Heart right ventricle (tissue), 16 donors: ENCODE measurements at regions of chr3 and their contacts with region 1.

Region 1: DNA sequence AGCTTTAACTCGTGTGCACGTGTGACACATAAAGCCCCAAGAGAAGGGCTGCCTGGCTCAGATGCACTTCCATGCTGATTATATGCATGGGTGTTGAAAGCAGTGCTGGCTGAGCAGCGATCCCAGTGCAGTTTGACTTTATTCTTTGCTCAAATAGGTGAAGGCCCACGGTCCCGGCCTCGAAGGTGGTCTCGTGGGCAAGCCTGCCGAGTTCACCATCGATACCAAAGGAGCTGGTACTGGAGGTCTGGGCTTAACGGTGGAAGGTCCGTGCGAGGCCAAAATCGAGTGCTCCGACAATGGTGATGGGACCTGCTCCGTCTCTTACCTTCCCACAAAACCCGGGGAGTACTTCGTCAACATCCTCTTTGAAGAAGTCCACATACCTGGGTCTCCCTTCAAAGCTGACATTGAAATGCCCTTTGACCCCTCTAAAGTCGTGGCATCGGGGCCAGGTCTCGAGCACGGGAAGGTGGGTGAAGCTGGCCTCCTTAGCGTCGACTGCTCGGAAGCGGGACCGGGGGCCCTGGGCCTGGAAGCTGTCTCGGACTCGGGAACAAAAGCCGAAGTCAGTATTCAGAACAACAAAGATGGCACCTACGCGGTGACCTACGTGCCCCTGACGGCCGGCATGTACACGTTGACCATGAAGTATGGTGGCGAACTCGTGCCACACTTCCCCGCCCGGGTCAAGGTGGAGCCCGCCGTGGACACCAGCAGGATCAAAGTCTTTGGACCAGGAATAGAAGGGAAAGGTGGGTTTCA is 87.7 kb downstream of the DNASE1L3 start:
- DNase-seq: no peak
- ATAC-seq: no peak
- H3K4me3 ChIP-seq: no peak overlapping the region
- H3K27ac ChIP-seq: no peak overlapping the region
- H3K4me1 ChIP-seq: peaks cover 14 to 31% (median 26%) of the 10 kb centered on the region in 9 donors
- H3K27me3 ChIP-seq: no peaks in the 10 kb centered on the region
- CTCF ChIP-seq: no peak

Region 2: DNA sequence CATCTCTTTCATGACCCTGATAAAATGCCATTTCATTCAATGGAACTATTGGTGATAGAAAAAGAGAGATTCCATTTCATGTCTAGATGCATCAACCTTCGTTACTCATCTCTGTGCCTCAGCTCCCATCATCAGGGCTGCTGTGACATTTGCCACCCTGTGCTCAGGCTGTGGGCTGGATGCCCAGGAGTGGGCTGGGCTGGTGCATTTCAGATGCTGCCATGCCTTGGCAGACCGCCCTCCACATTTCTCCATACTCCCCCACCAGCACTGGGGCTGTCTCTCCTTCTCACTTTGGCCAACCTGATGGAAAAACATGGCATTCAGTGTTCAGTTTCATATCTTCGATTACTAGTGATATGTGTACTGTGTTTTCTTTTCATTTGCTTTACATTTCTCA is 28.5 kb after region 1 on chr3:
- intact Hi-C with region 1: loop called in 1 of 10 experiments (anchors 2 kb)
- DNase-seq: peak; percentile 76 to 80
- ATAC-seq: peak; percentile 77 to 97 (median 92)
- H3K4me3 ChIP-seq: no peak overlapping the region
- H3K27ac ChIP-seq: peak overlapping the region in 4 of 10 donors; percentile 13 to 54 (median 29)
- H3K4me1 ChIP-seq: peaks cover 0 to 18% (median 0%) of the 10 kb centered on the region in 9 donors
- H3K27me3 ChIP-seq: no peaks in the 10 kb centered on the region
- CTCF ChIP-seq: no peak